H1 (cell line): ENCODE measurements at regions of chr5 and their contacts with region 1.

Region 1: DNA sequence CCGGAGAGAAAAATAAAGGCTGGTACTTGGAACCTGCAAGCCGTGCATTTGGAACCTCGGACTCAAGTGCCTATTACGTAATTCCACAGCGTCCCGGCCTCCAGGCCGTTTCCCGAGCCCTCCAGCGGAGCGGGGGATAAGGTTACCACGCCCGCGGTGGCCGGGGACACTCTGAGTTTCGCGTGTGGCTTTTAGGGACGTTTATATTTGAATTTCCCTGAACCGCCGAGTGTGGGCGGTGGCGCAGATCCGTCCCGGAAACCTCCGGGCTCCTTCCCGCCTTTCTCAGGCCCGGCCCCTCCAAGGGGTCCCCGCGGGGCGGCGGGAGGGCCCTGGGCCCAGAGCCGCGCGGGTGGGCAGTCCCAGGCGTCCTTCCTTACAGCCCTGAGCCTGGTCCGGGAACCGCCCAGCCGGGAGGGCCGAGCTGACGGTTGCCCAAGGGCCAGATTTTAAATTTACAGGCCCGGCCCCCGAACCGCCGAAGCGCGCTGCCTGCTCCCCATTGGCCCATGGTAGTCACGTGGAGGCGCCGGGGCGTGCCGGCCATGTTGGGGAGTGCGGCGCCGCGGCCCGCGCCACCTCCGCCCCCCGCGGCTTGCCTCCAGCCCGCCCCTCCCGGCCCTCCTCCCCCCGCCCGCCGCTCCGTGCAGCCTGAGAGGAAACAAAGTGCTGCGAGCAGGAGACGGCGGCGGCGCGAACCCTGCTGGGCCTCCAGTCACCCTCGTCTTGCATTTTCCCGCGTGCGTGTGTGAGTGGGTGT is at the start of gene LMNB1:
- DNase-seq: peak; percentile 93 to 96
- H3K4me3 ChIP-seq: peak within 1 kb of the TSS; percentile 84 to 95 (median 90)
- H3K27ac ChIP-seq: peak within 1 kb of the TSS; percentile 99
- H3K4me1 ChIP-seq: peaks cover 0 to 12% (median 0%) of the 10 kb centered on the region in 4 experiments; a peak in 3 of 7 replicates
- H3K27me3 ChIP-seq: no peaks in the 10 kb centered on the region
- CTCF ChIP-seq: no peak
- EP300 ChIP-seq: no peak; a peak in 1 of 3 replicates
- POLR2A ChIP-seq: peak; percentile 77 to 95
- RAD21 ChIP-seq: peak; percentile 2 to 26; a peak in 1 of 4 replicates
- total RNA-seq, gene LMNB1: 225 and 229 TPM in 2 replicates

Region 2: DNA sequence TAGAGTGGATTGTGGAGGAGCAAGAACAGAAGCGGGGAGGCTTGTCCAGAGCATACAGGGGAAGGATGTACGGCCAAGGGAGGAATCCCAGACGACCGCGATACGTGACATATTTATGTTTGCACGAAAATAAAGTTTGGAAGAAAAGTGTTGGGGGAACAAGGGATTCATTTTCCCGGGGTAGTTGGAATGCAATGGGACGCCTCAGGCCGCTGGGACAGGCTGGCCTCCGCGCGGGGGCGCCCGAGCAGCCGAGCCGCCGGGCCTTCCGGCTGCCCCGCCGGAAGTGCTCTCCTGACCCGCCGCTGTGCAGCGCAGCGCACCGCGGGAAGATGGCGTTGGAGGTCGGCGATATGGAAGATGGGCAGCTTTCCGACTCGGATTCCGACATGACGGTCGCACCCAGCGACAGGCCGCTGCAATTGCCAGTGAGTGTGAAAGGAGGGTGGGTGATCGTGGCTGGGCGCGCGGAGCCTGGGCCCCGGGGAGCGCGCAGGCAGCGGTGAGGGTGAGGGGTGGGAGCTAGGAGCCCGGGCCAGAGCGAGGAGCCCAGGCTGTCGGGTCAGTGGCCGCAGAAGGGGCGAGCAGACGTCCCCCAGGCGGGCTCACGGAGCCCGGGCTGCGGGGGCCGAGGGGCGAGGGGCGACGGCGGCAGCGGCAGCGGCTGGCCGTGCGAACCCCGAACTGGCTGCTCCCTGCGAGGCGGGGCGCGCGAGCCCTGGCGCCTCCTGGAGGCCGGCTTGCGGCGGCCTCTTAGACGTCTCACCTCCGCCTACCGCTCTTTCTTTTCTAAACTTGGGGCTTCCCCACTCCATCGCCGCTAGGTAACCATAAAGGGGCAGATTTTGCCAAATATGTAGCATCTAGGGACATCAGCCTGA is 175.8 kb before region 1 on chr5 and contains the start of gene PHAX:
- CTCF ChIA-PET with region 1: interaction called, 6 read pairs
- POLR2A ChIA-PET with region 1: interaction called, 23 read pairs
- DNase-seq: peak in 1 of 2 experiments; percentile 87
- H3K4me3 ChIP-seq: peak within 1 kb of the TSS; percentile 54 to 97 (median 89)
- H3K27ac ChIP-seq: peak within 1 kb of the TSS; percentile 94
- H3K4me1 ChIP-seq: peaks cover 2 to 8% (median 6%) of the 10 kb centered on the region in 4 experiments; a peak in 6 of 7 replicates
- H3K27me3 ChIP-seq: no peaks in the 10 kb centered on the region
- CTCF ChIP-seq: peak; percentile 74 to 81 (median 80)
- EP300 ChIP-seq: peak in 1 of 2 experiments; percentile 15; a peak in 1 of 3 replicates
- POLR2A ChIP-seq: peak; percentile 74 to 86
- RAD21 ChIP-seq: peak; percentile 3 to 26; a peak in 2 of 4 replicates
- total RNA-seq, gene PHAX: 58.1 and 59.5 TPM in 2 replicates

Region 3: GRCh38 chr5:126676195-126676624 is 100.5 kb before region 1 on chr5:
- CTCF ChIA-PET with region 1: interaction called, 251 read pairs
- POLR2A ChIA-PET with region 1: interaction called, 146 read pairs
- DNase-seq: peak in 1 of 2 experiments; percentile 62
- H3K4me3 ChIP-seq: no peak overlapping the region
- H3K27ac ChIP-seq: no peak overlapping the region
- H3K4me1 ChIP-seq: peaks cover 13 to 31% (median 19%) of the 10 kb centered on the region in 4 experiments
- H3K27me3 ChIP-seq: no peaks in the 10 kb centered on the region
- CTCF ChIP-seq: peak; percentile 3 to 87 (median 87)
- EP300 ChIP-seq: no peak
- POLR2A ChIP-seq: no peak
- RAD21 ChIP-seq: peak; percentile 91 to 95

Region 4: GRCh38 chr5:126736141-126736540 is 40.5 kb before region 1 on chr5:
- CTCF ChIA-PET with region 1: interaction called, 5 read pairs
- POLR2A ChIA-PET with region 1: interaction called, 10 read pairs
- DNase-seq: no peak
- H3K4me3 ChIP-seq: no peak overlapping the region
- H3K27ac ChIP-seq: no peak overlapping the region
- H3K4me1 ChIP-seq: peaks cover 0 to 4% (median 0%) of the 10 kb centered on the region in 4 experiments; a peak in 1 of 7 replicates
- H3K27me3 ChIP-seq: no peaks in the 10 kb centered on the region
- CTCF ChIP-seq: no peak
- EP300 ChIP-seq: no peak
- POLR2A ChIP-seq: no peak
- RAD21 ChIP-seq: no peak

Region 5: GRCh38 chr5:126794157-126794828 is 17.6 kb after region 1 on chr5:
- CTCF ChIA-PET with region 1: interaction called, 38 read pairs
- POLR2A ChIA-PET with region 1: interaction called, 36 read pairs
- DNase-seq: no peak
- H3K4me3 ChIP-seq: no peak overlapping the region
- H3K27ac ChIP-seq: no peak overlapping the region
- H3K4me1 ChIP-seq: peaks cover 0 to 2% (median 0%) of the 10 kb centered on the region in 4 experiments; a peak in 1 of 7 replicates
- H3K27me3 ChIP-seq: no peaks in the 10 kb centered on the region
- CTCF ChIP-seq: no peak
- EP300 ChIP-seq: no peak
- POLR2A ChIP-seq: no peak
- RAD21 ChIP-seq: no peak